Panc1 (cell line): ENCODE measurements at regions of chr7 and their contacts with region 1.

Region 1: DNA sequence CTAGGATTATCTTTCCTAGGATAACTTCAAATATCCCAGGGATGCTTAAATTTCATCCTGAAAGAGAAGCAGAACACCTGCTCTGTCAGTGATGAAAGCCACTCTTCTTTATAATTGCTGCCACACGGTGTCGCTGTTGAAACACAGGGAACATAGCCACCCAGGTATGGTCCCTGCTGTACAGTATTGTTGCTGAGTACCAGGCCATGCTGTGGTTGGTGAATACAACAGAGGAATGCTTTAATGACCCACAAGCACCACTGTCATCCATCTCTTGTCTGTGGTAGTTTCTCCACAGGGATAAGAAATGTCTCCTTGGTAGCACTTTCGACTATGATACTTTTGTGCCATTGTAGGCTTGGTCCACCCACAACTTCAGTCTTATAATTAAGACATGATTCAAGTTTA is 70.6 kb upstream of the STARD3NL start:
- DNase-seq: peak; percentile 51
- ATAC-seq: peak; percentile 96
- H3K4me3 ChIP-seq: no peak overlapping the region
- H3K27ac ChIP-seq: no peak overlapping the region
- H3K4me1 ChIP-seq: no peaks in the 10 kb centered on the region
- H3K27me3 ChIP-seq: peaks cover 12% of the 10 kb centered on the region; the same call in 1 of the 2 replicates
- CTCF ChIP-seq: peak; percentile 95

Region 2: GRCh38 chr7:37916673-37917660 is 190.5 kb before region 1 on chr7 and contains the start of gene SFRP4:
- CTCF ChIA-PET with region 1: interaction called, 3 read pairs
- POLR2A ChIA-PET with region 1: no interaction called
- in situ Hi-C with region 1: no loop called
- intact Hi-C with region 1: loop called (anchors 2 kb)
- DNase-seq: peak; percentile 51
- ATAC-seq: peak; percentile 66
- H3K4me3 ChIP-seq: peak within 1 kb of the TSS; percentile 45 to 60
- H3K27ac ChIP-seq: no peak within 1 kb of the TSS
- H3K4me1 ChIP-seq: peaks cover 20% of the 10 kb centered on the region
- H3K27me3 ChIP-seq: peaks cover 22% of the 10 kb centered on the region
- CTCF ChIP-seq: peak; percentile 94
- total RNA-seq, gene SFRP4: 0.74 TPM

Region 3: DNA sequence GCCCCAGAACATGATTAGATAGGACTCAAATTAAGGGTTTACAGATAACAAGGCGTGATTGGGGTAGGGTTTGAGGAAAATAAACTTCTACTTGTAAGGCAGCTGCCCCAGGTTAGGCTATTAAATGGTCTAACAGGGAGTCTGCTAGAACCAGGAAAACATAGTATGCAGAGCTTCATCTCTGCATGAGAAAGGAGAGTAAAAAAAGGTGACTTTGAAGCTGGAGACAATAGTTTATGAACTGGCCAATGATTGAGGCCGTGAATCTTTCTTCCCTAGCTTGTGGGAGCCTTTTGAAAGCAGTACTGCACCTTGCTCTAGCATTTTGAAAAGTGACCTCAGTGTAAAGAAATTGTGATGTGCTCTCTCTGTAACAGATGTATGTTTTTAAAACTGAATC is 22.1 kb after region 1 on chr7:
- CTCF ChIA-PET with region 1: interaction called, 11 read pairs
- POLR2A ChIA-PET with region 1: no interaction called
- in situ Hi-C with region 1: no loop called
- intact Hi-C with region 1: no loop called
- DNase-seq: no peak
- ATAC-seq: no peak
- H3K4me3 ChIP-seq: no peak overlapping the region
- H3K27ac ChIP-seq: no peak overlapping the region
- H3K4me1 ChIP-seq: no peaks in the 10 kb centered on the region
- H3K27me3 ChIP-seq: no peaks in the 10 kb centered on the region
- CTCF ChIP-seq: no peak

Region 4: GRCh38 chr7:38318803-38319416 is 211.4 kb after region 1 on chr7:
- CTCF ChIA-PET with region 1: interaction called, 3 read pairs
- POLR2A ChIA-PET with region 1: no interaction called
- in situ Hi-C with region 1: no loop called
- intact Hi-C with region 1: loop called (anchors 2 kb)
- DNase-seq: peak; percentile 70
- ATAC-seq: peak; percentile 95
- H3K4me3 ChIP-seq: no peak overlapping the region
- H3K27ac ChIP-seq: no peak overlapping the region
- H3K4me1 ChIP-seq: no peaks in the 10 kb centered on the region
- H3K27me3 ChIP-seq: no peaks in the 10 kb centered on the region; the same call in none of the 2 replicates
- CTCF ChIP-seq: peak; percentile 86